ENCODE measurements at regions of chr14 and their contacts with region 1.

Region 1: DNA sequence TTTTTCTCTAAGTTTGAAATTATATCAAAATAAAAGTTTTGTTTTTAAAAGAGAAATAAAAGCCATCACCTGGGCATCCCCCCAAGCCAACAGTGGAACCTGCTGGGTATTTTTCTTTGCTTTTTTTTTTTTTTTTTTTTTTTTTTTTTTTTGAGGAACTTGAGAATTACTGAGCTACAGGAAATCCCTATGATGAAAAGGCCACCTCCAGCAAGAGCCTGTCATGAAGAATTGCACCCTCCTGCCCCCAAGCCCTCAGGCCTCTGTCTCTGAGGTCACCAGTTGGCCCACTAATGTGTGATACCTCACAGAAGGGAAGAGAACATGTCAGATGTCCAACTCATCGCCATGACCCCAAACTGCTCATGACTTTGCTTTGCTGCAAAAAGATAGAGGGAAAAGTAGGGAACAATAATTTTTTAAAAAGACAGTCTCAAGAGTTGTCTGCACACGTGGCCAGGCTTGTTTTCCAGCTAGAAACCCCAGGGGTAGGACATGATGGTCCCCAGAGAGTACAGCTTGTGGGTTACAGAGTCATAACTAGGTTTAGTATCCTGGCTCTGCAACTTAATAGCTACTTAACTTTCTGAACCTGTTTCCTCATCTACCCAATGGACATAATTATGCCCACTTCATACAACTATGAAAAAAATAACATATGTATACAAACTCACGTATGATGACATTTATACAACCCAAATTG is 124.3 kb upstream of the EGLN3 start:
- DNase-seq: no peak
- H3K4me3 ChIP-seq: no peak overlapping the region
- H3K27ac ChIP-seq: no peak overlapping the region
- H3K4me1 ChIP-seq: no peaks in the 10 kb centered on the region
- H3K27me3 ChIP-seq: no peaks in the 10 kb centered on the region
- CTCF ChIP-seq: no peak

Region 2: GRCh38 chr14:33986804-33987203 is 88.4 kb before region 1 on chr14:
- CTCF ChIA-PET with region 1: no interaction called
- dilution Hi-C with region 1: no loop called
- in situ Hi-C with region 1: no loop called
- intact Hi-C with region 1: no loop called
- DNase-seq: peak; percentile 92
- H3K4me3 ChIP-seq: no peak overlapping the region
- H3K27ac ChIP-seq: no peak overlapping the region
- H3K4me1 ChIP-seq: peaks cover 18% of the 10 kb centered on the region
- H3K27me3 ChIP-seq: no peaks in the 10 kb centered on the region
- CTCF ChIP-seq: no peak

Region 3: GRCh38 chr14:34043627-34044372 is 31.4 kb before region 1 on chr14:
- CTCF ChIA-PET with region 1: interaction called, 20 read pairs
- dilution Hi-C with region 1: no loop called
- in situ Hi-C with region 1: no loop called
- intact Hi-C with region 1: no loop called
- DNase-seq: peak; percentile 77
- H3K4me3 ChIP-seq: no peak overlapping the region
- H3K27ac ChIP-seq: peak overlapping the region; percentile 59
- H3K4me1 ChIP-seq: peaks cover 30% of the 10 kb centered on the region
- H3K27me3 ChIP-seq: no peaks in the 10 kb centered on the region
- CTCF ChIP-seq: no peak